Activated naive CD4-positive, alpha-beta T cell treated with anti-CD3 and anti-CD28 coated beads for 36 hours (primary cell): ENCODE measurements at regions of chr5 and their contacts with region 1.

Region 1: GRCh38 chr5:180090098-180090768 is 18.7 kb upstream of the RNF130 start:
- DNase-seq: peak; percentile 82
- H3K4me3 Mint-ChIP-seq: peak overlapping the region; percentile 80
- H3K27ac Mint-ChIP-seq: peak overlapping the region; percentile 24
- H3K4me1 Mint-ChIP-seq: peaks cover 25% of the 10 kb centered on the region
- H3K27me3 Mint-ChIP-seq: peaks cover 3% of the 10 kb centered on the region

Region 2: GRCh38 chr5:179806250-179807222 is 283.7 kb before region 1 on chr5 and contains the start of gene MGAT4B:
- CTCF ChIA-PET with region 1: interaction called, 8 read pairs
- intact Hi-C with region 1: loop called (anchors 1 kb)
- DNase-seq: peak; percentile 62
- H3K4me3 Mint-ChIP-seq: peak within 1 kb of the TSS; percentile 84
- H3K27ac Mint-ChIP-seq: no peak within 1 kb of the TSS
- H3K4me1 Mint-ChIP-seq: peaks cover 38% of the 10 kb centered on the region
- H3K27me3 Mint-ChIP-seq: no peaks in the 10 kb centered on the region
- total RNA-seq, gene MGAT4B: 57.7 to 59.9 TPM

Region 3: DNA sequence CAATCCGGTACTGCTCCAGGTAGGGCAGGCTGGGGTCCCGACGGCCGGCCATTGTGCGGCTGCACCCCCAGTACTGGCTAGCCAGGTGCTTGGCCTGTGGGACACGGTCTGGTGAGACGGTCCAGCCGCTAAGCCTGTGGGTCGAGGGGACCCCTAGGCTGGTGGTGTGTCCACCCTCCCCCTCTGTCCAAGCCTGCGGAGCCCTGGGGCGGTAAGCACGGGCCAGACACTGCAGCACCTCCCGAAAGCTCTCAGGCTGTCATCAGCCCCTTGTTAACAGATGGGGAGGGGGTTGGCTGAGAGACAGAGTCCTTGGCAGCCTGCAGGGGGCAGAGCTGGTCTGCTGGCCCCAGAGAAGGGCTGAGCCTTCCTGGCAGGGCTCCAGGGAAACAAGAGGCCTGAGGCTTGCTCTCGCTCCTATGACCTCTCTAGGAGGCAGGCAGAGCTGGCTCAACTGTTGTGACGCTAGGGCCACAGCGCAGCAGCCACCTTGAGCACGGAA is 219.8 kb before region 1 on chr5:
- CTCF ChIA-PET with region 1: interaction called, 4 read pairs
- intact Hi-C with region 1: loop called (anchors 1 kb)
- DNase-seq: peak; percentile 33
- H3K4me3 Mint-ChIP-seq: no peak overlapping the region
- H3K27ac Mint-ChIP-seq: no peak overlapping the region
- H3K4me1 Mint-ChIP-seq: no peaks in the 10 kb centered on the region
- H3K27me3 Mint-ChIP-seq: no peaks in the 10 kb centered on the region

Region 4: DNA sequence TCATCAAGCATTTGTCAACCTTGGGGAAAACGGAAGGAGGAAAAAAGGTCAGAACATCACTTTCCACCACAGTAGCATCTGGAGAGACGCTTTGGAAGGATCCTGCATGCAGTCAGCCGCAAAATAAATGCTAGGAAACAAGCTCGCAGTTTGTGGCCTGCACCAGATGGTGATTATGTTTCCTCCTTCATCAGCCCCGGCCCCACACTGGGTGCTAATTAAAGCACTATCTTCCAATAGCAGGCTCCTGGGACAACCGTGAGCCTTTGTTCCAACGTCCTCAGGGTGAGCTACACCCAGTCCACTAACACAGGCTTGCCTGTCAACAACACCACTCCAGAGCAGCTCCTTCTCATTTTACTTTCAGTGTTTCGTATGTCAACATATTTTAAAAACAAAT is 82.7 kb before region 1 on chr5:
- CTCF ChIA-PET with region 1: no interaction called
- intact Hi-C with region 1: loop called (anchors 5 kb)
- DNase-seq: no peak
- H3K4me3 Mint-ChIP-seq: no peak overlapping the region
- H3K27ac Mint-ChIP-seq: no peak overlapping the region
- H3K4me1 Mint-ChIP-seq: peaks cover 20% of the 10 kb centered on the region
- H3K27me3 Mint-ChIP-seq: no peaks in the 10 kb centered on the region